MCF 10A (cell line): ENCODE measurements at regions of chr5 and their contacts with region 1.

Region 1: DNA sequence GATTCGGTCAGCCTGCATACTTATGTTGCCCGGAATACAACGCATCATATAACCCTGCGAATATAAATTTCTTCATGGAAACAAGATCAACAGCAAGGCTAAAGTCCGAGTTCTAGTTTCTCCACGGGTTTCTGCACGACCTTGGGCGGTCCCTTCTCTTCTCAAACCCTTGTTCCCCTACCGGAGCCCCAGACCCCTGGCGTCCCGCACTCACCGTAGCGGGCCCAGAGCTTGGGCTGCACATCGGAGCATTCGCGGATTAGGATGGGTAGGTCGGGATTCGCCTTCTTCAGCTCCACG is 438 bp downstream of the NDUFA2 start:
- DNase-seq: no peak
- H3K4me3 Mint-ChIP-seq: peak overlapping the region; percentile 86
- H3K27ac Mint-ChIP-seq: peak overlapping the region; percentile 93
- H3K4me1 Mint-ChIP-seq: peaks cover 18% of the 10 kb centered on the region
- H3K27me3 Mint-ChIP-seq: no peaks in the 10 kb centered on the region
- CTCF ChIP-seq: no peak

Region 2: GRCh38 chr5:140381972-140382371 is 265.0 kb before region 1 on chr5:
- CTCF ChIA-PET with region 1: no interaction called
- POLR2A ChIA-PET with region 1: no interaction called
- intact Hi-C with region 1: no loop called
- DNase-seq: no peak
- H3K4me3 Mint-ChIP-seq: no peak overlapping the region
- H3K27ac Mint-ChIP-seq: no peak overlapping the region
- H3K4me1 Mint-ChIP-seq: peaks cover 5% of the 10 kb centered on the region
- H3K27me3 Mint-ChIP-seq: no peaks in the 10 kb centered on the region
- CTCF ChIP-seq: no peak

Region 3: DNA sequence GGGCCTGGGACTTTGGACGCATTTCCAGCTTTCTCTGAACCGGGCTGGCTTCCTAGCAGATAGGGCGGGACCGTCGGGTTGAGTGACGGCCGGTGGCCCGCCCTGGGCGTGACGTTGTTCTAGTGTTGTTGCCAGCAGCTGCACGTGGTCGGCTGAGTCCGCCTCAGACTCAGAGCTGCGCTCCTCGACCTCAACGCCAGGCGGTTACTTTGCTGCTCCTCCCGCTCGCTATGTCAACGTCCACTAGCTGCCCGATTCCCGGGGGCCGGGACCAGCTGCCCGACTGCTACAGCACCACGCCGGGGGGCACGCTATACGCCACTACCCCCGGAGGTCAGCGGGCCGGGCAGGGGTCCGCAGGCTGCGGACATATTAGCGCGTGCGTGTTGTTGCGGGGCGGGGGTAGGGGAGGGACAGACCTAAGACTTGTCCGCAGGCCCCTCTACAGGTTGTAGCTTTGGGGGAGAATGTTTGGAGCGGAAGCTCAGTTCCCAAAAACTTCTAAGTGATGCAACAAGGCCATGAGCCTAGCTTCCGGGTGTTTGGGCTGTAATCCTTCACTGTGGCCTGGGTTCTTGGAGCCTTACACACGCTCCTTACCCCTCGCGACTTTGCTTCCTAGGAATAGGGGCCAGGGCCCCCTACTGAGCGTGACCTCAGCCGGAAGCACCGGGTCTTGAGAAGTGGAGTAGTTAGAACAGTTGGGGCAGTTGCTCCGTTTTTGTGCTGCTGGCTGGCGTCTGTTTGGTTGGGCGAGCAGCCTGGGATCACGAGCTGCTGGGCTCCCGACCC is 99.3 kb before region 1 on chr5 and contains the start of gene EIF4EBP3:
- CTCF ChIA-PET with region 1: interaction called, 42 read pairs
- POLR2A ChIA-PET with region 1: interaction called, 120 read pairs
- intact Hi-C with region 1: no loop called
- DNase-seq: peak; percentile 97
- H3K4me3 Mint-ChIP-seq: peak within 1 kb of the TSS; percentile 77
- H3K27ac Mint-ChIP-seq: peak within 1 kb of the TSS; percentile 80
- H3K4me1 Mint-ChIP-seq: peaks cover 27% of the 10 kb centered on the region
- H3K27me3 Mint-ChIP-seq: no peaks in the 10 kb centered on the region
- CTCF ChIP-seq: peak; percentile 74
- total RNA-seq, gene EIF4EBP3: 25.3 and 35.3 TPM in 2 replicates

Region 4: GRCh38 chr5:140575309-140575708 is 71.7 kb before region 1 on chr5:
- CTCF ChIA-PET with region 1: interaction called, 10 read pairs
- POLR2A ChIA-PET with region 1: interaction called, 169 read pairs
- intact Hi-C with region 1: no loop called
- DNase-seq: peak; percentile 92
- H3K4me3 Mint-ChIP-seq: no peak overlapping the region
- H3K27ac Mint-ChIP-seq: no peak overlapping the region
- H3K4me1 Mint-ChIP-seq: no peaks in the 10 kb centered on the region
- H3K27me3 Mint-ChIP-seq: no peaks in the 10 kb centered on the region
- CTCF ChIP-seq: peak; percentile 82

Region 5: DNA sequence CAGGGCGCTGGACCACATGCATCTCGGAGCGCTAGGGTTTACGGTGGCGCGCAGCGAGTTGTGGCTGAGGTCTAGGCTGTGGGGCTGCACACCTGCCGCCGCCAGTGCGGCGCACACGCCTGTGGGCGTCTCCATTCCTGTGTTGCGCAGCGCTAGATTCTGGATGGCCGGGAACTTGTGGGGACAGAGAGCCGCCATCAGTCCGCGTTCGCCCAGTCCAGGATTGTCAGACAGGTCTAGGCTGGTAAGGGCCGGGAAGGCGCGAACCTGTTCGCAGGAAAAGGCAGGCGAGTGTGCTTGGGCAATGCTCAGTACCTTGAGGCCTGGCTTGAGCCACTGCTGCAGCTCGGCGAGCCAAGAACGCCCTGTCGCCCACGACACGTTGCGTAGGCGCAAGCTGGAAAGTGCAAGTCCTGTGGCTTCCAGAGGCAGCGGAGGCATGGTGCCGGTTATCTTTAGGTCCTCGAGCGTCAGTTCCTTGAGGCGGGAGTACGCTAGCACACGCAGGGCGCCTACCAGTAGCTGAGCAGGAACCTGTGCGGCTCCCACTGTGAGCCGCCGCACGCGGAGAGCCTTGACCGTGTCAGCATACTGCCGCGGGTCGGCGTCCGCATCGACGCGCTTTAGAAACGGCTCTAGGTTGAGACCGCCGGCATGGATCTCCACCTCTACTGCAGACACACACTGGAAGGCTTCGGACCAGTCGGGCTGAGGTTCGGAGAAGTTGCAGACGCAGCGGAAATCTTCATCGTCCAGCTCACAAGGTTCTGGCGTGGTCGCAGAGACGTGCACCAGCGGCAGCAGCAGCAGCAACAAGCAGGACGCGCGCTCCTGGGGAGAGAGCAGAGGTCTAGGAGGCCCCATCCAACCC is 14.6 kb before region 1 on chr5:
- CTCF ChIA-PET with region 1: interaction called, 19 read pairs
- POLR2A ChIA-PET with region 1: interaction called, 45 read pairs
- intact Hi-C with region 1: no loop called
- DNase-seq: peak; percentile 85
- H3K4me3 Mint-ChIP-seq: peak overlapping the region; percentile 68
- H3K27ac Mint-ChIP-seq: no peak overlapping the region
- H3K4me1 Mint-ChIP-seq: peaks cover 30% of the 10 kb centered on the region
- H3K27me3 Mint-ChIP-seq: no peaks in the 10 kb centered on the region
- CTCF ChIP-seq: no peak

Region 6: GRCh38 chr5:140690941-140691924 is 44.2 kb after region 1 on chr5 and contains the starts of genes HARS1 and HARS2:
- CTCF ChIA-PET with region 1: interaction called, 4 read pairs
- POLR2A ChIA-PET with region 1: interaction called, 121 read pairs
- intact Hi-C with region 1: loop called (anchors 1 kb)
- DNase-seq: peak; percentile 99
- H3K4me3 Mint-ChIP-seq: peak within 1 kb of the TSS; percentile 88
- H3K27ac Mint-ChIP-seq: peak within 1 kb of the TSS; percentile 87
- H3K4me1 Mint-ChIP-seq: peaks cover 16% of the 10 kb centered on the region
- H3K27me3 Mint-ChIP-seq: no peaks in the 10 kb centered on the region
- CTCF ChIP-seq: no peak
- total RNA-seq, gene HARS1: 126 and 131 TPM in 2 replicates
- total RNA-seq, gene HARS2: 48.5 and 54.3 TPM in 2 replicates

Region 7: DNA sequence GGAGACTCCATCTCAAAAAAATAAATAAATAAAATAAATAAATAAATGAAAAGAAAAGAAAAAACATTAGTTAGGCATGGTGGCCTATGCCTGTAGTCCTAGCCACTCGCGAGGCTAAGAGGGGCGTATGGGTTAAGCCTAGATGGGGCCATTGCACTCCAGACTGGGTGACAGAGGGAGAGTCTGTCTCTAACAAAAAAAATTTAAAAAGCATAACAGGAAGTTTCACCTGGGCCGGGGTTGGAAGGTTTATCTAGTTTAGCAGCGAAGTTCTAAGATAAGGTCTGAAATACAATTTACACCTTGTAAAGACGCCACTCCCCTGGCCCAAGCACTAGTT is 71.2 kb after region 1 on chr5:
- CTCF ChIA-PET with region 1: interaction called, 3 read pairs
- POLR2A ChIA-PET with region 1: interaction called, 22 read pairs
- intact Hi-C with region 1: loop called (anchors 5 kb)
- DNase-seq: no peak
- H3K4me3 Mint-ChIP-seq: peak overlapping the region; percentile 73
- H3K27ac Mint-ChIP-seq: peak overlapping the region; percentile 86
- H3K4me1 Mint-ChIP-seq: peaks cover 24% of the 10 kb centered on the region
- H3K27me3 Mint-ChIP-seq: no peaks in the 10 kb centered on the region
- CTCF ChIP-seq: no peak

Region 8: DNA sequence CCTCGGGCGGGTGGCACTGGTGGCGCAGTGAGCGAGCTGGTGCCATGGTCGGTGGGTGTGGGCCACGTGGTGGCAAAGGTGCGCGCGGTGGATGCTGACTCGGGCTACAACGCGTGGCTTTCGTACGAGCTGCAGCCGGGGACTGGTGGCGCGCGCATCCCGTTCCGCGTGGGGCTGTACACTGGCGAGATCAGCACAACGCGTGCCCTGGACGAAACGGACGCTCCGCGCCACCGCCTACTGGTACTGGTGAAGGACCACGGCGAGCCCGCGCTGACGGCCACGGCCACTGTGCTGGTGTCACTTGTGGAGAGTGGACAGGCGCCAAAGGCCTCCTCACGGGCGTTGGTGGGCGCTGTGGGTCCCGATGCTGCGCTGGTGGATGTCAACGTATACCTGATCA is 161.9 kb after region 1 on chr5:
- CTCF ChIA-PET with region 1: no interaction called
- POLR2A ChIA-PET with region 1: no interaction called
- intact Hi-C with region 1: no loop called
- DNase-seq: no peak
- H3K4me3 Mint-ChIP-seq: no peak overlapping the region
- H3K27ac Mint-ChIP-seq: no peak overlapping the region
- H3K4me1 Mint-ChIP-seq: no peaks in the 10 kb centered on the region
- H3K27me3 Mint-ChIP-seq: no peaks in the 10 kb centered on the region
- CTCF ChIP-seq: no peak